Activated CD4-positive, alpha-beta T cell treated with anti-CD3 and anti-CD28 coated beads for 36 hours (primary cell): ENCODE measurements at regions of chr16 and their contacts with region 1.

Region 1: DNA sequence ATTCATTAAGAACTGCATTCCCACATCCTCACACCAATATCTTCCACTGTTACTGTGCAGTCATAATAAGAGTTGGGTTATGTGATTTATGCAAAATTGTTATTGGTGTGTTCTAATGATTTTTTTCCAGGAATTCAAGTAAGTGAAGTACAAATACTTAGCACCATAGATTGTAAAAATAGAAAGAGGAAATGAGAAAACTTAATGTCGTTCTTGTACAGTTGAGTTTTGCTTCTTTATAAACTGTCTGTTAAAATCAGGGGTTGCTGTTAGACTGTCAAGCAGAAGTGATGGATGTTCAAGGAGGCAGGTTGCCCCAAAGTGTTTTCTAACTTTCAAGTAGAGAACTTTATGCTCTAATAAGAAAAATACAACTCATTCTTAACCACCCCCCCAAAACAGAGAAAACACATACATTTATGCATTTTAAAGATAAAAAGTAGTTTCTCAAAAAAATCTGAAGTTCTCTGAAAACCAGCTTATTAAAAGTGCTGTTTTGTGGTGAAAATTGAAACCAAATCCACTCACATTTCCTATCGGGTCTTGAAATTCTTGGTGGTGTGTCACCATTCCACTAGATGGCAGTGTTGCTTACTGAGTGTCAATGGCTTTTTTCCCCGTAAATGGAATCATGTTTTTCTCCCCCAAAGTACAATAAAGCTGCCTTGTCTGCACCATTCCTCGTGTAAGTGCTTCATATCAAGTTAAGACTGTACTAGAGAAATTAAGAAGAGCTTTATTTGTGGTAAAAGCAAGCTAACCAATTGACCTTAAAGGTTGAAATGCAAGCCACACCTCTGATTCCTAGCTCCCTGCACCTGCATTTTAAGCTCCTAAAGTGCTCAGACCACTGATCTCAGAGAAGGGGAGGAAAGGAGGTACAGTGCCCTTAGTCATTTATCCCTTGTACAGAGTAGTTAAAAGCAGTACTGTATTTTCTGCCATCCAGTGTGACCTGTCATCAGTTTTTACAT is 4.7 kb upstream of the IGSF6 start:
- DNase-seq: peak; percentile 40
- ATAC-seq: no peak
- H3K4me3 Mint-ChIP-seq: no peak overlapping the region
- H3K27ac Mint-ChIP-seq: no peak overlapping the region
- H3K4me1 Mint-ChIP-seq: peaks cover 41% of the 10 kb centered on the region
- H3K27me3 Mint-ChIP-seq: no peaks in the 10 kb centered on the region

Region 2: DNA sequence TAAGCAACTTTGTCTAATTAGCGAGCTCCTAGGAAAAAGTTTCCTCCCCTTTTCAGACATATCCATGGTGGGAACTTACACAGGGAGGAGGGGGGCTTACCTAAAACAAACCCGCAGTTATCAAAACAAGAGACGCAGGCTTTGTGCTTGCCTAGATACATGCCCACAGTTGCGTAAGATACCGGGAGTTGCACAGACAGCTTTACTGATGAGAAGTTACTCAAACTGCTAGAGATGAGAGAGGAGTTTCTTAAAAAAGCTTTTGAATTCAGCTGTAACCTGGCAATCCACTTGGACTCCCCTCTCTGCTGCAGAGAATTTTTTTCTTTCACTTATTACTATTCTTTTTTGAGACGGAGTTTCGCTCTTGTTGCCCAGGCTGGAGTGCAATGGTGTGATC is 438.9 kb before region 1 on chr16:
- CTCF ChIA-PET with region 1: no interaction called
- POLR2A ChIA-PET with region 1: no interaction called
- intact Hi-C with region 1: no loop called
- DNase-seq: no peak
- ATAC-seq: no peak
- H3K4me3 Mint-ChIP-seq: no peak overlapping the region
- H3K27ac Mint-ChIP-seq: no peak overlapping the region
- H3K4me1 Mint-ChIP-seq: no peaks in the 10 kb centered on the region
- H3K27me3 Mint-ChIP-seq: peaks cover 20% of the 10 kb centered on the region

Region 3: GRCh38 chr16:21646721-21647561 is 10.1 kb before region 1 on chr16:
- CTCF ChIA-PET with region 1: interaction called, 48 read pairs
- POLR2A ChIA-PET with region 1: interaction called, 3 read pairs
- intact Hi-C with region 1: no loop called
- DNase-seq: peak; percentile 89
- ATAC-seq: peak; percentile 89
- H3K4me3 Mint-ChIP-seq: peak overlapping the region; percentile 54
- H3K27ac Mint-ChIP-seq: peak overlapping the region; percentile 92
- H3K4me1 Mint-ChIP-seq: peaks cover 61% of the 10 kb centered on the region
- H3K27me3 Mint-ChIP-seq: no peaks in the 10 kb centered on the region

Region 4: DNA sequence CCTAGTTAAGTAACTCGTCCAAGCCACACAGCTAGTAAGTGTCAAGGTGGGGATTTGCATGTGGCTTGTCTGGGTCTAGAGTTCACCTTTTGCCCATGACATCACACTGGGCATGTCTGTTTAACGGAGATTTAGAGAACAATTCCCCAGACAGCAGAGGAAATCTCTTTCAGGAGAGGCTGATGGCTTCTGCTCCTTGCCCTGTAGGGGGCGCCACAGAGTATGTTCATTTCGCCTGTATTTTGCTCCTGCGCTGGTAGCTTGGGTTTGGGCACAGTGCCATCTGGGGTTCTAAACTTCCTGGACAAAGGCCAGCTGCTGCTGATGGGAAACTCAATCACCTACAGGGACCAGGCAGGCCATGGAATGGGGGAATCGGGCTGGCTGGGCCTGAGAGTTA is 27.1 kb after region 1 on chr16:
- CTCF ChIA-PET with region 1: interaction called, 14 read pairs
- POLR2A ChIA-PET with region 1: interaction called, 3 read pairs
- intact Hi-C with region 1: no loop called
- DNase-seq: peak; percentile 70
- ATAC-seq: no peak
- H3K4me3 Mint-ChIP-seq: no peak overlapping the region
- H3K27ac Mint-ChIP-seq: no peak overlapping the region
- H3K4me1 Mint-ChIP-seq: no peaks in the 10 kb centered on the region
- H3K27me3 Mint-ChIP-seq: peaks cover 3% of the 10 kb centered on the region

Region 5: DNA sequence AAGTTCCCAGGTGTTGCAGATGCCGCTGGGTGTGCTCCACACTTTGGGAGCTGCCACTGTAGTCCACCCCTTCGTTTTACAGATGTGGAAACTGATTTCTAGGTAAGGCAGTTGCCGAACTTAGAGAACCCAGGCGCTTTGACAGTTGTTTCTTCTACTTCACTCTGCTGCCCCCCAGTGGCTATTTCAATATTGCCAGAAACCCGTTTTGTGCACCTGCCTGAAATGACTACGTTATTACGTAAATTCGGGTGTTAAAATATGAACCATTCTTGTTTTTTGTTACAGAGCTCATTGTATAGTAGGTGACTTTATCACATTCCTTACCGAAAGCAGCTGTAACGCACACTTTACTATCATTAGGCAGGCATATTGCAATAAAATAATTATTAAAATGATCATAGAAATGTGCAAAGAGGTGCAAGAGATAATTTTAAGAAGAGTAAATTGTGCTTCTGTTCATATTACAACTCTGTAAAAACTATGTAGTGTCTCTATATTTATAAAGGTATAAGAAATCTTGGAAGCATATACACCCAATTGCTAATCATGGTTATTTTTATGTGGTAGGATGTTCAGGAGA is 51.5 kb after region 1 on chr16:
- CTCF ChIA-PET with region 1: interaction called, 40 read pairs
- POLR2A ChIA-PET with region 1: no interaction called
- intact Hi-C with region 1: loop called (anchors 1 kb)
- DNase-seq: peak; percentile 92
- ATAC-seq: peak; percentile 66
- H3K4me3 Mint-ChIP-seq: no peak overlapping the region
- H3K27ac Mint-ChIP-seq: no peak overlapping the region
- H3K4me1 Mint-ChIP-seq: no peaks in the 10 kb centered on the region
- H3K27me3 Mint-ChIP-seq: no peaks in the 10 kb centered on the region